ENCODE measurements at regions of chr6 and their contacts with region 1.

Region 1: GRCh38 chr6:26285143-26286134 is 79.6 kb upstream of the BTN3A2 start:
- DNase-seq: peak; percentile 80
- ATAC-seq: peak; percentile 75
- H3K4me3 Mint-ChIP-seq: peak overlapping the region; percentile 86
- H3K27ac Mint-ChIP-seq: peak overlapping the region; percentile 96
- H3K4me1 Mint-ChIP-seq: peaks cover 29% of the 10 kb centered on the region
- H3K27me3 Mint-ChIP-seq: peaks cover 3% of the 10 kb centered on the region
- CTCF ChIP-seq: no peak

Region 2: DNA sequence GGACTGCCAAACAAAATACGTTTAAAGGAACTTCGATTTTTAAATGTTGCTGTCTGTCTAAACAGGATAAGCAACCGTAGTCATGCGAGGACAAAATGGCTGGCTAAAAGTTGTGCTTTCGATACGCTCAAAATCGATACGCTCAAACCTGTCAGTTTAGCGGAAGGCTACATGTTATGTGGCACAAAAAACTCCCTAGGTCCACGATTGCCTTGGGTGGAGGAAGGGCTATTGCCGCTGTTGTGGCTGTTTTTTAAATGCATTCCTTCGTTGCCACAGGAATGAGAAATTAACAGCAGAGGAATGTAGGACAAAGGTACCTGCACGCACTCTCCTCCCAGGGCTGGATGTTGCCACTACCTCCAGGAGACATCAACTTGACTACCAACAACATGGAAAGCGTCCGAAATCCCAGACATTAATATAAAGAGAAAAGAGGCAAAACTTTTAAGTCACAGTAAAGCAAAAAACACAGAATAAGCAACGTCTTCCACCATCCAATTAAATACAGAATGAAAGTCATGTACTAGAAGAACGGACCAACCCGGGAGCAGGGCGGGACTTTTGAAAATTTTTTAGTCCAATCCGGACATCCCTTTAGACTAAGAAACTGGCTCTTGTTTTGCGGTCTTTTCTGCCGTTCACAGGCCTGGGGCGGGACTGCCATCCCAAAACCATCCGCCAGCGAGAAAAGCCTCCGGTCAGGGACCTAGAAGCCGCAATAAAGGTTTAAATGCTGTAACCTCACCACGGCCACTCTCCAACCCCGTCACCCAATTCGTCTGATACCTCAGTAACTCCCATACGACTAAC is 230.4 kb before region 1 on chr6:
- CTCF ChIA-PET with region 1: no interaction called
- POLR2A ChIA-PET with region 1: interaction called, 14 read pairs
- intact Hi-C with region 1: no loop called
- DNase-seq: peak; percentile 63
- ATAC-seq: peak; percentile 65
- H3K4me3 Mint-ChIP-seq: peak overlapping the region; percentile 97
- H3K27ac Mint-ChIP-seq: peak overlapping the region; percentile 100
- H3K4me1 Mint-ChIP-seq: peaks cover 20% of the 10 kb centered on the region
- H3K27me3 Mint-ChIP-seq: no peaks in the 10 kb centered on the region
- CTCF ChIP-seq: no peak

Region 3: GRCh38 chr6:26196846-26197648 is 88.4 kb before region 1 on chr6:
- CTCF ChIA-PET with region 1: no interaction called
- POLR2A ChIA-PET with region 1: interaction called, 139 read pairs
- intact Hi-C with region 1: no loop called
- DNase-seq: peak; percentile 63
- ATAC-seq: peak; percentile 53
- H3K4me3 Mint-ChIP-seq: peak overlapping the region; percentile 93
- H3K27ac Mint-ChIP-seq: peak overlapping the region; percentile 96
- H3K4me1 Mint-ChIP-seq: peaks cover 52% of the 10 kb centered on the region
- H3K27me3 Mint-ChIP-seq: no peaks in the 10 kb centered on the region
- CTCF ChIP-seq: no peak

Region 4: GRCh38 chr6:26249957-26250697 is 35.3 kb before region 1 on chr6:
- CTCF ChIA-PET with region 1: no interaction called
- POLR2A ChIA-PET with region 1: interaction called, 71 read pairs
- intact Hi-C with region 1: loop called (anchors 1 kb)
- DNase-seq: peak; percentile 57
- ATAC-seq: peak; percentile 63
- H3K4me3 Mint-ChIP-seq: peak overlapping the region; percentile 94
- H3K27ac Mint-ChIP-seq: peak overlapping the region; percentile 90
- H3K4me1 Mint-ChIP-seq: peaks cover 36% of the 10 kb centered on the region
- H3K27me3 Mint-ChIP-seq: no peaks in the 10 kb centered on the region
- CTCF ChIP-seq: no peak

Region 5: DNA sequence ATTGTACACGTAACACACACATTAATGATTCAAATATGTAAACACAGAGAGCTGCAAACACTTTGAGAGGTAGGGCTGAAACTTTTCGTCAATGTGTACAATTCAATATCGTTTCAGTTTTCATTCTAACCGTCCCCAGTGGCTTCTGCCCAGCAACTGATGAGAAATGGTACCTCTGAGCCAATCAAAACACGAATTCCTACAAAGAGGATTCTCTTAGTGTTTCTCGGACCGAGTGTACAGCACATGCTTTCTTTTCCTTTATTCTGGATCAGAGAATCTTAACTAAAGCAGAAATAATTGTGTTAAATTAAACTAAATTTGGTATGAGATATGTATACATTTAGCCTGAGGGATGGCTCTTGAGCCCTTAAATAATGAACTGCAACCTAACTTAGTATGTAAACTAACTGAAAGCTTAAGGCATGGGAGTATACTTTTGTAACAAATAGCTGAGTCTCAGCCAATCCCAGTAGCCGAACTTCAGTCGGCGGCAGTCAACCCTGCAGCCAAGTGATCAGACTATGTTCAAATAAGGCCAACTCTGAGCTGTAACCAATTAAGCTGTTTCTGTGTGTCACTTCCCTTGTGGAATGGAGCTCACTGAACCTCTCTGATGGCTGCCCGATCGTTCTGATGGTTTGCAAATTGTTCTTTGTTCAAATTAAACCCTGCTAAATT is 188.5 kb after region 1 on chr6:
- CTCF ChIA-PET with region 1: no interaction called
- POLR2A ChIA-PET with region 1: interaction called, 17 read pairs
- intact Hi-C with region 1: loop called (anchors 1 kb)
- DNase-seq: peak; percentile 49
- ATAC-seq: peak; percentile 94
- H3K4me3 Mint-ChIP-seq: peak overlapping the region; percentile 96
- H3K27ac Mint-ChIP-seq: peak overlapping the region; percentile 100
- H3K4me1 Mint-ChIP-seq: peaks cover 70% of the 10 kb centered on the region
- H3K27me3 Mint-ChIP-seq: no peaks in the 10 kb centered on the region
- CTCF ChIP-seq: no peak

Region 6: GRCh38 chr6:27132532-27133280 is 847.3 kb after region 1 on chr6:
- CTCF ChIA-PET with region 1: no interaction called
- POLR2A ChIA-PET with region 1: interaction called, 13 read pairs
- intact Hi-C with region 1: loop called (anchors 1 kb)
- DNase-seq: peak; percentile 77
- ATAC-seq: peak; percentile 84
- H3K4me3 Mint-ChIP-seq: no peak overlapping the region
- H3K27ac Mint-ChIP-seq: no peak overlapping the region
- H3K4me1 Mint-ChIP-seq: peaks cover 14% of the 10 kb centered on the region
- H3K27me3 Mint-ChIP-seq: no peaks in the 10 kb centered on the region
- CTCF ChIP-seq: no peak

Region 7: DNA sequence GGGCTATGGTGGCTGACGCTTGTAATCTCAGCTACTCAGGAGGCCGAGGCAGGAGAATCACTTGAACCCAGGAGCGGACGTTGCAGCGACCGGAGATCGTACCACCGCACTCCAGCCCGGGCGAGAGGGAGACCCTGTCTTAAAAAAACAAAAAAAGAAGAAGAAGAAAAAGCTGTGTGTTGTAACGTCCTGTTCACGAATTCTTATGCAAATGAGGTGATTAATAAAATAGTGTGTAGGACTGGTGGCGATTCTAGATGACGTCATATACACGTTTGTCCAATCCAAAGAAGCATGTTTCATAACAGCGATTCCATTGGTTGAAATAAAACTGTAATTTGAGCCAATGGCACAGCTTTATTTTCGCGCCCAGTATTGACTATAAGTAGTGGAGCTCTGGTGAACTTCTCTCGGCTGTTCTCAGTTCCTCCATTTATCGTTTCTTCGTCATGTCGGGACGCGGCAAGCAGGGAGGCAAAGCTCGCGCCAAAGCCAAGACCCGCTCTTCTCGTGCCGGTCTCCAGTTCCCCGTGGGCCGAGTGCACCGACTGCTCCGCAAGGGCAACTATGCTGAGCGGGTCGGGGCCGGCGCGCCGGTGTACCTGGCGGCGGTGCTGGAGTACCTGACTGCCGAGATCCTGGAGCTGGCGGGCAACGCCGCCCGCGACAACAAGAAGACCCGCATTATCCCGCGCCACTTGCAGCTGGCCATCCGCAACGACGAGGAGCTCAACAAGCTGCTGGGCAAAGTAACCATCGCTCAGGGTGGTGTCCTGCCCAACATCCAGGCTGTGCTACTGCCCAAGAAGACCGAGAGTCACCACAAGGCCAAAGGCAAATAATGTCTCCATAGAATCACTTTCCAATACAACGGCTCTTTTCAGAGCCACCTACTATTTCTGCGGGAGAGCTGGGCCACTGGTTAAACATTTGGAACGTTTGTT is 1579.7 kb after region 1 on chr6:
- CTCF ChIA-PET with region 1: no interaction called
- POLR2A ChIA-PET with region 1: interaction called, 4 read pairs
- intact Hi-C with region 1: loop called (anchors 1 kb)
- DNase-seq: peak; percentile 68
- ATAC-seq: peak; percentile 85
- H3K4me3 Mint-ChIP-seq: peak overlapping the region; percentile 98
- H3K27ac Mint-ChIP-seq: peak overlapping the region; percentile 99
- H3K4me1 Mint-ChIP-seq: peaks cover 48% of the 10 kb centered on the region
- H3K27me3 Mint-ChIP-seq: no peaks in the 10 kb centered on the region
- CTCF ChIP-seq: no peak

Measured in activated B cell treated with CpG ODN at 0.5 μM for 24 hours (primary cell).